Gastrocnemius medialis (tissue), 4 donors: ENCODE measurements at regions of chr6 and their contacts with region 1.

Region 1: GRCh38 chr6:106309766-106310373 is 15.7 kb downstream of the ATG5 start:
- DNase-seq: no peak
- ATAC-seq: no peak
- H3K4me3 ChIP-seq: no peak overlapping the region
- H3K27ac ChIP-seq: no peak overlapping the region
- H3K4me1 ChIP-seq: peaks cover 10 to 16% of the 10 kb centered on the region in 2 donors
- H3K27me3 ChIP-seq: no peaks in the 10 kb centered on the region
- CTCF ChIP-seq: no peak
- POLR2A ChIP-seq: no peak

Region 2: GRCh38 chr6:105431226-105431625 is 878.6 kb before region 1 on chr6:
- in situ Hi-C with region 1: no loop called
- intact Hi-C with region 1: loop called (anchors 5 kb)
- DNase-seq: no peak
- ATAC-seq: no peak
- H3K4me3 ChIP-seq: no peak overlapping the region
- H3K27ac ChIP-seq: no peak overlapping the region
- H3K4me1 ChIP-seq: no peaks in the 10 kb centered on the region
- H3K27me3 ChIP-seq: no peaks in the 10 kb centered on the region
- CTCF ChIP-seq: peak in 4 of 5 experiments; percentile 10 to 47 (median 28)
- POLR2A ChIP-seq: no peak

Region 3: GRCh38 chr6:105892577-105893262 is 417.1 kb before region 1 on chr6:
- in situ Hi-C with region 1: no loop called
- intact Hi-C with region 1: no loop called
- DNase-seq: no peak
- ATAC-seq: peak; percentile 8 to 33
- H3K4me3 ChIP-seq: no peak overlapping the region
- H3K27ac ChIP-seq: no peak overlapping the region
- H3K4me1 ChIP-seq: no peaks in the 10 kb centered on the region
- H3K27me3 ChIP-seq: no peaks in the 10 kb centered on the region
- CTCF ChIP-seq: no peak
- POLR2A ChIP-seq: no peak